H1 (cell line): ENCODE measurements at regions of chr11 and their contacts with region 1.

Region 1: GRCh38 chr11:27158722-27159679 is 118.4 kb downstream of the BBOX1 start:
- DNase-seq: peak in 1 of 2 experiments; percentile 33
- H3K4me3 ChIP-seq: no peak overlapping the region
- H3K27ac ChIP-seq: no peak overlapping the region
- H3K4me1 ChIP-seq: no peaks in the 10 kb centered on the region
- H3K27me3 ChIP-seq: no peaks in the 10 kb centered on the region
- CTCF ChIP-seq: peak in 2 of 3 experiments; percentile 71 to 76; a peak in 3 of 4 replicates
- EP300 ChIP-seq: no peak
- POLR2A ChIP-seq: no peak
- RAD21 ChIP-seq: peak; percentile 94

Region 2: GRCh38 chr11:26286472-26287066 is 872.4 kb before region 1 on chr11:
- CTCF ChIA-PET with region 1: interaction called, 11 read pairs
- POLR2A ChIA-PET with region 1: no interaction called
- DNase-seq: no peak
- H3K4me3 ChIP-seq: no peak overlapping the region
- H3K27ac ChIP-seq: no peak overlapping the region
- H3K4me1 ChIP-seq: peaks cover 0 to 4% (median 3%) of the 10 kb centered on the region in 4 experiments; a peak in 3 of 7 replicates
- H3K27me3 ChIP-seq: no peaks in the 10 kb centered on the region
- CTCF ChIP-seq: peak; percentile 11 to 60 (median 56)
- EP300 ChIP-seq: no peak
- POLR2A ChIP-seq: no peak
- RAD21 ChIP-seq: peak; percentile 61 to 66

Region 3: DNA sequence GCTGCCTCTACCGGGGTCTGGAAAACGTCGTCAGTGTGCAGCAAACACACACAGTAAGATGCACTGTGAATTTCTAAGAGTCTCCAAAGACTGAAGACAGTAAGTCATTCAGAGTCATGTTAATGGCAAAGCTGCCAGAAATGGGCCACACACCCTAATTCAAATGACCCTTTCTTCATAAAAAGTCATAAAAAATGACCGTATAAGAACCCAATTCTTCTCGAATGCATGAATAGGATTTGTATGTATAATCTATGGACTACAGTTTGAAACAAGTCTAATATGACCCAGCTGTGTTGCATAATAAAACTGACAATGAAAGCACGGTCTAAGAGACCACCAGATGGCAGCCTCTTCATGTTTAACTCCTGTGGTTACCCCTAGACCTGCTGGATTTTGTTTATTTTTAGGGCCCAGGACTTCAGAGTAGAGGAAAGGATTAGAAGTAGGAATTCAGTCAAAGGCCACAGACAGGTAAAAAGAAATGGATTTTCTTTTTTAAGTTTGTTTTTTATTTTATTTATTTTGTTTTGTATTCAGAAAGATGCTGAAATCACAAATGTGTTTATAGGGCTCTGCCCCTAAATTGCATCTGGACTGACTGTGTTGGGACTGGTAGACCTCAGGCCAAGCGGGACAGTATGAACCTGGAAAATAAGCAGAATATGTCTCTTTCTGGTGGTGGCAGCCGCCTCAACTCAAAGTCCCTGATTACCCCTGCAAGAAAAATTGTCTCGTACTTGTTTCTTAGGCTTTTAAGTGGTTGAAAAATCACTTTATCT is 405.1 kb before region 1 on chr11:
- CTCF ChIA-PET with region 1: interaction called, 77 read pairs
- POLR2A ChIA-PET with region 1: no interaction called
- DNase-seq: no peak
- H3K4me3 ChIP-seq: no peak overlapping the region
- H3K27ac ChIP-seq: no peak overlapping the region
- H3K4me1 ChIP-seq: no peaks in the 10 kb centered on the region
- H3K27me3 ChIP-seq: no peaks in the 10 kb centered on the region
- CTCF ChIP-seq: peak in 2 of 3 experiments; percentile 68 to 73; a peak in 3 of 4 replicates
- EP300 ChIP-seq: no peak
- POLR2A ChIP-seq: no peak
- RAD21 ChIP-seq: peak; percentile 89 to 95

Region 4: DNA sequence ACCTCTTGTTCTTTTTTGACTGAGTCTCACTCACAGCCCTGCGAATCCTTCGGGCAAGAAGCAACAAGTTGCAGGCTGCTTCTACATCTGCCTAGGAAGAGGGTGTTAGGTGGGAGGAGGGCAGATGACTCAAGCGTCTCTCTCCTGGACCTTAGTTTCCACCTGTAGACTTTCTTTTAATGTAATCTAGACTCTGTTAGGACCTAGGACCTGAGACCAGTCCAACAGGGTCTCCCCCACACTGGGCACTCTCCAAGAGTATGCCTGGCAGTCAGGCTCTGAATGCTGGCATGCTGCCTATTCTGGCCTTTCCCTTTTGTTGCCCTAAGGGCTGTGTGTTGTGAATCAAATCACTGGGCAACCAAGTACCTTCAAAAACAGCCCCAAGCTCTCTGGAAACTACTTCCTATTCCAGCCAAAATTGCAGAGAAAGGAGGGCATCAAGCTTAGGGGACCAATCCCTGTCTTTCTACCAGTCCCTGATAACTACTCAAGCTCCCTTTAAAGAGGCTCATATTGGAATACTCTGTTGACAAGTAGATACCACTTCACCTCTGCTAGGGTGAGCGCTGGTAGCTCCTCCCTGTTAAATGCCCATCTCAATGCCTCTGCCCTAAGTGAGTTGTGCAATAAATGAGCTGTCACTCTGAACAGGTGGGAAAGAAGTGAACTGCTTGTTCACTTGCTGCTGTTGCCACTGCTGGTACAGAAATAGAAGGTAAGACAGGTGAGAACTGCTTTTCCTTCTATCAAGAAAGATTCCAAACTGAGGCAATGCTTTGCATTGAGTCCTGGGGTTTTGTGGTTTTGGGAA is 118.5 kb before region 1 on chr11 and contains the start of gene BBOX1:
- CTCF ChIA-PET with region 1: interaction called, 16 read pairs
- POLR2A ChIA-PET with region 1: no interaction called
- DNase-seq: no peak
- H3K4me3 ChIP-seq: no peak within 1 kb of the TSS
- H3K27ac ChIP-seq: no peak within 1 kb of the TSS
- H3K4me1 ChIP-seq: peaks cover 0 to 4% (median 0%) of the 10 kb centered on the region in 4 experiments; a peak in 3 of 7 replicates
- H3K27me3 ChIP-seq: no peaks in the 10 kb centered on the region
- CTCF ChIP-seq: no peak
- EP300 ChIP-seq: no peak
- POLR2A ChIP-seq: no peak
- RAD21 ChIP-seq: no peak
- total RNA-seq, gene BBOX1: not detected in 2 replicates

Region 5: DNA sequence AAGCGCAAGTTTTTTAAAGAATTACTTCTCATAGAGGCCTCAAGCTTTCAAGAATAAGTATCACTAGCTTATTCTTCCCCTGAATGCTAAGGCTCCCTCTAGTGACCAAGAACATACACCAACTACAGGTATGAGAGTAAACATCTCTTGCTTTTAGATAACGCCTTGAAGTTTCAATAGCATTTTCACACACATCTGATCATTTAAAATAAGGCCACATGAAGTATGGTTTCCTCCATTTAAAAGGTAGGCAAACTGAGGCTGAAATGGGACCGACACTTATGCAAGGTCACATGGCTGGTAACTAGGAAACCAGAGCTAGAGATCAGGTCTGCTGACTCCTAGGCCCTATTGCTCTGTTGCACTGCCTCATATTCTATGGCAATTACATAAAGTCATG is 137.5 kb after region 1 on chr11:
- CTCF ChIA-PET with region 1: interaction called, 12 read pairs
- POLR2A ChIA-PET with region 1: no interaction called
- DNase-seq: no peak
- H3K4me3 ChIP-seq: no peak overlapping the region
- H3K27ac ChIP-seq: no peak overlapping the region
- H3K4me1 ChIP-seq: peaks cover 0 to 3% (median 0%) of the 10 kb centered on the region in 4 experiments; a peak in 2 of 7 replicates
- H3K27me3 ChIP-seq: no peaks in the 10 kb centered on the region
- CTCF ChIP-seq: peak in 2 of 3 experiments; percentile 53 to 75; a peak in 2 of 4 replicates
- EP300 ChIP-seq: no peak
- POLR2A ChIP-seq: no peak
- RAD21 ChIP-seq: peak; percentile 74 to 75